ENCODE measurements at regions of chr17 and their contacts with region 1.

Region 1: GRCh38 chr17:10618202-10618635 is 38.9 kb downstream of the MYH3 start:
- DNase-seq: peak; percentile 39
- H3K4me3 ChIP-seq: no peak overlapping the region
- H3K27ac ChIP-seq: no peak overlapping the region
- H3K4me1 ChIP-seq: peaks cover 6% of the 10 kb centered on the region
- H3K27me3 ChIP-seq: peaks cover 20% of the 10 kb centered on the region
- CTCF ChIP-seq: peak; percentile 87

Region 2: GRCh38 chr17:10327640-10328039 is 290.6 kb before region 1 on chr17:
- intact Hi-C with region 1: loop called (anchors 10 kb)
- DNase-seq: peak; percentile 72
- H3K4me3 ChIP-seq: no peak overlapping the region
- H3K27ac ChIP-seq: no peak overlapping the region
- H3K4me1 ChIP-seq: no peaks in the 10 kb centered on the region
- H3K27me3 ChIP-seq: peaks cover 32% of the 10 kb centered on the region
- CTCF ChIP-seq: peak; percentile 91

Region 3: GRCh38 chr17:10492004-10492403 is 126.2 kb before region 1 on chr17:
- intact Hi-C with region 1: no loop called
- DNase-seq: no peak
- H3K4me3 ChIP-seq: no peak overlapping the region
- H3K27ac ChIP-seq: no peak overlapping the region
- H3K4me1 ChIP-seq: no peaks in the 10 kb centered on the region
- H3K27me3 ChIP-seq: no peaks in the 10 kb centered on the region
- CTCF ChIP-seq: no peak

Region 4: DNA sequence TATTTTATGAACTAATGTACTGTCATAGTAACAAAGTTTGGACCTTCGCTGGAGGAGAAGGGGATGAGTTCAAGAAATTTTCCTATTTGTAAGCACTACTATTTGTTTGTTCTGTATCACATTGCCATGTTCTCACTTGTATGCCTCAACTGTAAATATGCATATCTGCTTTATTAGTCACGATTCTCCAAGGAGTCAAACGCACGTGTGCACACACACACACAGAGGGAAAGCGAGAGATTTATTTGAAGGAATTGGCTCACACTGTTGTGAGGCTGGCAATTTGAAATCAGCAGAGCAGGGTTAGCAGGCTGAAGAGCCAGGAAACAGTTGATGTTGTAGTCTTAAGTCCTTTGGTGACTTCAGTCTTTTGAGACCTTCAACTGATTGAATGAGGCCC is 43.9 kb before region 1 on chr17:
- intact Hi-C with region 1: no loop called
- DNase-seq: no peak
- H3K4me3 ChIP-seq: no peak overlapping the region
- H3K27ac ChIP-seq: no peak overlapping the region
- H3K4me1 ChIP-seq: no peaks in the 10 kb centered on the region
- H3K27me3 ChIP-seq: peaks cover 9% of the 10 kb centered on the region
- CTCF ChIP-seq: no peak